ENCODE measurements at regions of chr4 and their contacts with region 1.

Region 1: GRCh38 chr4:184168406-184169019 is 49.2 kb downstream of the ENPP6 start:
- DNase-seq: peak; percentile 44
- H3K4me3 Mint-ChIP-seq: no peak overlapping the region
- H3K27ac Mint-ChIP-seq: no peak overlapping the region
- H3K4me1 Mint-ChIP-seq: peaks cover 17% of the 10 kb centered on the region
- H3K27me3 Mint-ChIP-seq: peaks cover 43% of the 10 kb centered on the region

Region 2: DNA sequence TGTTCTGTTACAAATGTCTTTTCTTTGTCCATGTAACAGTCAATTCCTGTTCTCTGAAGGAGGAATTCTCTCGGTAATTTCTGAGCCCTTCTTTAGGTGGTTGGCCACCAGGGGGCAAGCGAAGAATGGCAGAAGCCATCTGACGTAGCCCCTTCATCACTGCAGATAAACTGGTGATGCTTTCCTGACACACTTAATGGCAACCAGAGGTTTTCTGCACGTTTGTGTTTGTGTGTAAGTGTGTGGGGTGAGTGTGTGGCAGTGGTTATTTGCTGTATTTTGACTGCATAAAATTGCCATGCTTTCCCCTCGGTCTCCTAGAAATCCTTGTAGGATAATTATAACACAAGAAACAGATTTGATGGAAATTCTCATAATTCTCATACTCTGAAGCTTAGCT is 328.2 kb before region 1 on chr4:
- intact Hi-C with region 1: loop called (anchors 1 kb)
- DNase-seq: peak; percentile 34
- H3K4me3 Mint-ChIP-seq: no peak overlapping the region
- H3K27ac Mint-ChIP-seq: no peak overlapping the region
- H3K4me1 Mint-ChIP-seq: no peaks in the 10 kb centered on the region
- H3K27me3 Mint-ChIP-seq: peaks cover 12% of the 10 kb centered on the region

Region 3: DNA sequence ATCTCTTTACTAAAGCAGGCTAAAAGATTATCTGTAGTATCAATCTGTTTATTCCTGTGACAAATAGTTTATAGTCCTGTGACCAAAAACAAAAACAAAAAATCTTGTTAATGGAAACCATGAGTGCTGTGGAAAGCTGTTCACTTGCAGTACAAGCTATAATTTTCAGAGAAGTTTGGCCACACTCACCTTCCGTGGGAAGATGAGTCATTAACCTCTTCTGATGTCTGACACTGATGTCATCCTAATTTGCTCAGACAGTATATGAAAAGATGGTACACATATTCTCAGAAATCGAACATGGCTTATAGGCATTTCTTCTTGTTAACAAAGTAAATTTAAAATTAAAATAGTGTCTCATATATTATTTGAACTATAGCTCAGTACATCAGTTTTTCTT is 69.1 kb after region 1 on chr4:
- intact Hi-C with region 1: loop called (anchors 5 kb)
- DNase-seq: peak; percentile 38
- H3K4me3 Mint-ChIP-seq: peak overlapping the region; percentile 9
- H3K27ac Mint-ChIP-seq: peak overlapping the region; percentile 85
- H3K4me1 Mint-ChIP-seq: peaks cover 37% of the 10 kb centered on the region
- H3K27me3 Mint-ChIP-seq: no peaks in the 10 kb centered on the region

Measured in activated T-helper 2 cell treated with anti-CD3 and anti-CD28 coated beads, Interferon-gamma antibody, Interleukin-2, Interleukin-4, amounts not matched to agents 10 μg/mL and 5 μg/mL and 100 μg/mL, durations not matched to agents 14 hours and 24 hours and 36 hours (primary cell).